ENCODE measurements at regions of chr6 and their contacts with region 1.

Region 1: GRCh38 chr6:33248925-33249731 is 22.5 kb downstream of the VPS52 start:
- DNase-seq: peak; percentile 89 to 99 (median 94)
- ATAC-seq: peak; percentile 83
- H3K4me3 ChIP-seq: peak overlapping the region; percentile 70
- H3K4me3 Mint-ChIP-seq: peak overlapping the region; percentile 92
- H3K27ac ChIP-seq: peak overlapping the region; percentile 98
- H3K27ac Mint-ChIP-seq: peak overlapping the region; percentile 97
- H3K4me1 ChIP-seq: peaks cover 32% of the 10 kb centered on the region
- H3K4me1 Mint-ChIP-seq: peaks cover 37% of the 10 kb centered on the region
- H3K27me3 ChIP-seq: no peaks in the 10 kb centered on the region
- H3K27me3 Mint-ChIP-seq: no peaks in the 10 kb centered on the region
- CTCF ChIP-seq: peak; percentile 32

Region 2: DNA sequence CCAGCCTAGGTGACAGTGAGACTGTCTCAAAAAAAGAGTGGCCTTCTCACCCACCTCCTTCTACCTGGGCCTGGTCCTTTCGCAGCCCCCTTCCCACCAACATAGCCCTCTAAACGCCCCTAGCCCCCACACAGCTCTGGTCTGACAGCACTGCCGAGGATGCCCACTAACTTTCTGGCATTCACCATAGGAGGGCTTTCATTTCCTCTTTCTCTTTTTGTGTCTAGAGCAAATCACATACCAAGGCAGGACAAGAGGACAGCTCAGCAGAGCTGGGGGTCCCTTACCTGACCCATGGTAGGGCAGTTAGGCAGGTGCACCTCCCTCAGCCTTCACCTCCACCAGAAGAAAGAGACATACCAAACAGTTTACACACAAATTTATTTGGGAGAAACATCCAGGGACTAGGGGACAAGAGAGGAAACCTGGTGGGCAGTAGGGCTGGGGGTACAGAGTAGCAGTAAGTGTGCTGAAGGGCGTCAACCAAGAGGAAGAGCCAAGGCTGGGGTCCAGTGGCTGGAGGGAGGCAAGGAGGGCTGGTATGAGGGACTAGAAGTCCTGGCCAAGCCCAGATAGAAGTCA is 1572.7 kb before region 1 on chr6:
- CTCF ChIA-PET with region 1: no interaction called
- POLR2A ChIA-PET with region 1: no interaction called
- intact Hi-C with region 1: no loop called
- DNase-seq: no peak
- ATAC-seq: no peak
- H3K4me3 ChIP-seq: no peak overlapping the region
- H3K4me3 Mint-ChIP-seq: no peak overlapping the region
- H3K27ac ChIP-seq: no peak overlapping the region
- H3K27ac Mint-ChIP-seq: no peak overlapping the region
- H3K4me1 ChIP-seq: peaks cover 15% of the 10 kb centered on the region
- H3K4me1 Mint-ChIP-seq: peaks cover 16% of the 10 kb centered on the region
- H3K27me3 ChIP-seq: no peaks in the 10 kb centered on the region
- H3K27me3 Mint-ChIP-seq: no peaks in the 10 kb centered on the region
- CTCF ChIP-seq: no peak

Region 3: GRCh38 chr6:33118525-33119123 is 130.5 kb before region 1 on chr6:
- CTCF ChIA-PET with region 1: interaction called, 6 read pairs
- POLR2A ChIA-PET with region 1: interaction called, 11 read pairs
- intact Hi-C with region 1: loop called (anchors 1 kb)
- DNase-seq: peak in 4 of 14 experiments; percentile 28 to 85 (median 78)
- ATAC-seq: peak; percentile 80
- H3K4me3 ChIP-seq: no peak overlapping the region
- H3K4me3 Mint-ChIP-seq: no peak overlapping the region
- H3K27ac ChIP-seq: no peak overlapping the region
- H3K27ac Mint-ChIP-seq: no peak overlapping the region
- H3K4me1 ChIP-seq: peaks cover 20% of the 10 kb centered on the region
- H3K4me1 Mint-ChIP-seq: peaks cover 15% of the 10 kb centered on the region
- H3K27me3 ChIP-seq: peaks cover 30 to 36% of the 10 kb centered on the region in 2 experiments
- H3K27me3 Mint-ChIP-seq: peaks cover 65% of the 10 kb centered on the region
- CTCF ChIP-seq: peak; percentile 82

Region 4: GRCh38 chr6:33200219-33201146 is 48.6 kb before region 1 on chr6 and contains the starts of genes RXRB and SLC39A7:
- CTCF ChIA-PET with region 1: interaction called, 24 read pairs
- POLR2A ChIA-PET with region 1: interaction called, 20 read pairs
- intact Hi-C with region 1: loop called (anchors 1 to 2 kb)
- DNase-seq: peak; percentile 97 to 100 (median 99)
- ATAC-seq: peak; percentile 78
- H3K4me3 ChIP-seq: peak within 1 kb of the TSS; percentile 78
- H3K4me3 Mint-ChIP-seq: peak within 1 kb of the TSS; percentile 98
- H3K27ac ChIP-seq: peak within 1 kb of the TSS; percentile 97
- H3K27ac Mint-ChIP-seq: peak within 1 kb of the TSS; percentile 100
- H3K4me1 ChIP-seq: peaks cover 65% of the 10 kb centered on the region
- H3K4me1 Mint-ChIP-seq: peaks cover 79% of the 10 kb centered on the region
- H3K27me3 ChIP-seq: no peaks in the 10 kb centered on the region
- H3K27me3 Mint-ChIP-seq: no peaks in the 10 kb centered on the region
- CTCF ChIP-seq: no peak
- total RNA-seq, gene RXRB: 42.9 to 45.0 TPM
- total RNA-seq, gene SLC39A7: 8.6 to 9.6 TPM

Region 5: DNA sequence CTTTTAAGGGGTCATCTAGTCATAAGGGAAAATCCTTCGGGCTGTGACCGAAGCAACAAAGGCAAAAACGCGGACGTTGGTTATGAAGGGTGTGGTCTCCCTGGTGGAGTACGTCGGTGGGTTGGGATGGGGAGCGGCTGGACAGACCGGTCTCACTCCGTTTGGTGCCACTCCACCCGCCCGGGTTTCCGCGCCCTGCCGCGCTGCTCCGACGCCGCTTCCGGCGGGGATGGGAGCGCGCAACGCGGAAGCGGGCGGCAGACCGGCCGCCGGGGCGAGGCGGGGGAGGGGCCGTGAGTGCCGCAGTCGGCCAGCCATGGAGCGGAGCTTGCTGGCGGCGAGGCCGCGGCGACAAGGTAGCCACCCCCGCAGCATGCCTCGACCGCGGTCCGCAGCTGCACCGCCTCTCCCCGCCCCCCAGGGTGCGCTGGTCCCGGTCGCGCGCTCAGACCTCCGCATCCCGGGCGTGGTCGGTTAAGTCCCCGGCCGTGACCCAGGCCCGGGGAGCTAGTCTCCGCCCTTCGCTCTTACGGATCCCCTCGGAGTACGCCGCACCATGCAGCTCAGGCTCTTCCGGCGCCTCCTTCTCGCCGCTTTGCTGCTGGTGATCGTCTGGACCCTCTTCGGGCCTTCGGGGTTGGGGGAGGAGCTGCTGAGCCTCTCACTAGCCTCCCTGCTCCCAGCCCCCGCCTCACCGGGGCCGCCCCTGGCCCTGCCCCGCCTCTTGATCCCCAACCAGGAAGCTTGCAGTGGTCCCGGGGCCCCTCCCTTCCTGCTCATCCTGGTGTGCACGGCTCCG is 27.9 kb after region 1 on chr6 and contains the start of gene B3GALT4:
- CTCF ChIA-PET with region 1: interaction called, 16 read pairs
- POLR2A ChIA-PET with region 1: interaction called, 95 read pairs
- intact Hi-C with region 1: no loop called
- DNase-seq: peak in 13 of 14 experiments; percentile 45 to 89 (median 64)
- ATAC-seq: peak; percentile 68
- H3K4me3 ChIP-seq: peak within 1 kb of the TSS; percentile 96
- H3K4me3 Mint-ChIP-seq: peak within 1 kb of the TSS; percentile 93
- H3K27ac ChIP-seq: peak within 1 kb of the TSS; percentile 82 to 90
- H3K27ac Mint-ChIP-seq: peak within 1 kb of the TSS; percentile 97
- H3K4me1 ChIP-seq: peaks cover 83% of the 10 kb centered on the region
- H3K4me1 Mint-ChIP-seq: peaks cover 67% of the 10 kb centered on the region
- H3K27me3 ChIP-seq: no peaks in the 10 kb centered on the region
- H3K27me3 Mint-ChIP-seq: no peaks in the 10 kb centered on the region
- CTCF ChIP-seq: peak; percentile 36
- total RNA-seq, gene B3GALT4: 11.1 to 12.7 TPM

Region 6: DNA sequence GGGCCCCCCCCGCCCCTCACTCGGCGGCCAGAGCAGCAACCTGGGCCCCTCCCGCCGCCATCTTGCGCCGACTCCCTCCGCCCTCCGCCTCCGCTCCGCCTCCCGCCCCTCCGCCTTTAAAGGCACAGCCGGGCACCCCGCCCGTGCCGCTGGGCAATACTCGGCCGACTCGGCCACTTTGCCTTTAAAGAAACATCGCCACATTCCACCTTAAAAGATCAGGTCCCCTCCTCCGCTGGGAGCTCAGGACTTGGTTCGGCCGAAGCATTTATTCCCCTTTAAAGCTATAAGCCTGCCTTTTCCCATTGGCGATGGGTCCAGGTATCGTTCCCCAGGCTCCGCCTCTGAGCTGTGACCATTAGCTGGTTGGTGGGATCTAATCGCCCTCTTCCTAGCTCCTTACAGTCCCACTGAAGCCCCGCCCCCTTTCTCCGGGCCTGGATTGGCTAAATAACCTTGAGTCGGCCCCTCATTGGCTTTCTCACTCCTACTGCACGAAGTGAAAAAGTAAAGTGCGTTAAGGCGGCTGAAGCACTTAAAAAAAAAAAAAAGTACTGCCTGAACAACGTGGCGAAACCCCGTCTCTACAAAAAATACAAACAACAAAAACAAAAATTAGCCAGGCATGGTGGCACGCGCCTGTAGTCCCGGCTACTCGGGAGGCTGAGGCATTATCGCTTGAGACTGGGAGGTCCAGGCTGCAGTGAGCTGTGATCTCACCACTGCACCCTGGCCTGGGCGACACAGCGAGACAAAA is 68.7 kb after region 1 on chr6 and contains the start of gene ZBTB22:
- CTCF ChIA-PET with region 1: interaction called, 4 read pairs
- POLR2A ChIA-PET with region 1: interaction called, 20 read pairs
- intact Hi-C with region 1: no loop called
- DNase-seq: peak; percentile 90 to 98 (median 95)
- ATAC-seq: peak; percentile 64
- H3K4me3 ChIP-seq: peak within 1 kb of the TSS; percentile 67
- H3K4me3 Mint-ChIP-seq: peak within 1 kb of the TSS; percentile 100
- H3K27ac ChIP-seq: peak within 1 kb of the TSS; percentile 81 to 86
- H3K27ac Mint-ChIP-seq: peak within 1 kb of the TSS; percentile 94
- H3K4me1 ChIP-seq: peaks cover 75% of the 10 kb centered on the region
- H3K4me1 Mint-ChIP-seq: peaks cover 95% of the 10 kb centered on the region
- H3K27me3 ChIP-seq: no peaks in the 10 kb centered on the region
- H3K27me3 Mint-ChIP-seq: no peaks in the 10 kb centered on the region
- CTCF ChIP-seq: no peak
- total RNA-seq, gene ZBTB22: 11.6 to 13.6 TPM

Region 7: DNA sequence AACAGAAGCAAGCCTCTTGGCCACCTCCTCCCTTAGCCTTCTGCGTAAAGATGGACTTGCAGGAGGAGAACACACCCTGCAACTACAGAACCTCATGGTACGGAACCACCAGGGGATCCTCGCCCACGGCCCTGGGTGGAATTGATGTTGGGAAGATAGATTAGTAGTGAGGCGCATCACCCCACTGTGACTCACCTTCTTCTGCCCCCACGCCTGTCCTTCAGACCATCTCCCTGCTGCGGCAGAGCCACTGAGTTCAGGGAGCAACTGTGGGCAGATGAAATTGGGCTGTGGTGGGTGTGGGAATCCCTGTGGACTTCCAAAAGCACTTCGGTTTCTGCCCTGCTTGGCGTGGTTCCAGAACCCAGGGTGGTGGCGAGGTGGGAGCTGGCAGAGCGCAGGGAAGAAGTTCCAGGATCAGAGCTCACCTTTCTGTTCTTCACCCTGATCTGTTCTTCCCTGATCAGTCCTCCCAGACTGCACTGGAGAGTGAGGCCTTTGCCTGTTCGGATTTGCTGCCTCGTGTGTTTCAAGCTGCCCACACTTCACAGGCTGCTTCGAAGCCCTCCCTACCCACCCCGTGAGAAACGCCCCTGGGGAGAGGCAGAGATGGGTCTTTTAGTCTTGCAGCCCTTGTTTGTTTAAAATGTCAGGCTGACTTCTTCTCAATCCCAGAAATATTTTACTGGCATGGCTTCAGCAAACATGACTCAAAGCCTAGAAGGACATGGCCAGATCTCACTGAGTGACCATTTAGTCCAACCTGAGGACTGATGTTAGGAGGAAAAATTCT is 647.5 kb after region 1 on chr6:
- CTCF ChIA-PET with region 1: no interaction called
- POLR2A ChIA-PET with region 1: no interaction called
- intact Hi-C with region 1: no loop called
- DNase-seq: no peak
- ATAC-seq: no peak
- H3K4me3 ChIP-seq: no peak overlapping the region
- H3K4me3 Mint-ChIP-seq: no peak overlapping the region
- H3K27ac ChIP-seq: no peak overlapping the region
- H3K27ac Mint-ChIP-seq: no peak overlapping the region
- H3K4me1 ChIP-seq: peaks cover 28% of the 10 kb centered on the region
- H3K4me1 Mint-ChIP-seq: peaks cover 34% of the 10 kb centered on the region
- H3K27me3 ChIP-seq: no peaks in the 10 kb centered on the region
- H3K27me3 Mint-ChIP-seq: no peaks in the 10 kb centered on the region
- CTCF ChIP-seq: no peak